IMR-90 (cell line): ENCODE measurements at regions of chr17 and their contacts with region 1.

Region 1: GRCh38 chr17:29640413-29640812 is 17.7 kb upstream of the CORO6 start:
- DNase-seq: peak; percentile 74
- ATAC-seq: peak; percentile 18
- H3K4me3 ChIP-seq: no peak overlapping the region
- H3K27ac ChIP-seq: peak overlapping the region; percentile 48; the same call in 1 of the 2 replicates
- H3K4me1 ChIP-seq: peaks cover 20% of the 10 kb centered on the region
- H3K27me3 ChIP-seq: no peaks in the 10 kb centered on the region
- CTCF ChIP-seq: no peak
- POLR2A ChIP-seq: no peak
- RAD21 ChIP-seq: no peak

Region 2: GRCh38 chr17:29760761-29761696 is 120.6 kb after region 1 on chr17:
- CTCF ChIA-PET with region 1: interaction called, 8 read pairs
- POLR2A ChIA-PET with region 1: no interaction called
- dilution Hi-C with region 1: no loop called
- in situ Hi-C with region 1: no loop called
- intact Hi-C with region 1: loop called (anchors 1 kb)
- DNase-seq: peak; percentile 83
- ATAC-seq: peak; percentile 99
- H3K4me3 ChIP-seq: peak overlapping the region; percentile 75
- H3K27ac ChIP-seq: peak overlapping the region; percentile 54
- H3K4me1 ChIP-seq: no peaks in the 10 kb centered on the region
- H3K27me3 ChIP-seq: no peaks in the 10 kb centered on the region
- CTCF ChIP-seq: no peak
- POLR2A ChIP-seq: peak; percentile 78
- RAD21 ChIP-seq: no peak

Region 3: GRCh38 chr17:29777663-29778062 is 137.2 kb after region 1 on chr17:
- CTCF ChIA-PET with region 1: interaction called, 32 read pairs
- POLR2A ChIA-PET with region 1: no interaction called
- dilution Hi-C with region 1: no loop called
- in situ Hi-C with region 1: loop called (anchors 5 kb)
- intact Hi-C with region 1: loop called (anchors 1 kb)
- DNase-seq: no peak
- ATAC-seq: no peak
- H3K4me3 ChIP-seq: no peak overlapping the region
- H3K27ac ChIP-seq: no peak overlapping the region
- H3K4me1 ChIP-seq: peaks cover 3% of the 10 kb centered on the region; the same call in 1 of the 2 replicates
- H3K27me3 ChIP-seq: no peaks in the 10 kb centered on the region
- CTCF ChIP-seq: no peak
- POLR2A ChIP-seq: no peak
- RAD21 ChIP-seq: no peak

Region 4: DNA sequence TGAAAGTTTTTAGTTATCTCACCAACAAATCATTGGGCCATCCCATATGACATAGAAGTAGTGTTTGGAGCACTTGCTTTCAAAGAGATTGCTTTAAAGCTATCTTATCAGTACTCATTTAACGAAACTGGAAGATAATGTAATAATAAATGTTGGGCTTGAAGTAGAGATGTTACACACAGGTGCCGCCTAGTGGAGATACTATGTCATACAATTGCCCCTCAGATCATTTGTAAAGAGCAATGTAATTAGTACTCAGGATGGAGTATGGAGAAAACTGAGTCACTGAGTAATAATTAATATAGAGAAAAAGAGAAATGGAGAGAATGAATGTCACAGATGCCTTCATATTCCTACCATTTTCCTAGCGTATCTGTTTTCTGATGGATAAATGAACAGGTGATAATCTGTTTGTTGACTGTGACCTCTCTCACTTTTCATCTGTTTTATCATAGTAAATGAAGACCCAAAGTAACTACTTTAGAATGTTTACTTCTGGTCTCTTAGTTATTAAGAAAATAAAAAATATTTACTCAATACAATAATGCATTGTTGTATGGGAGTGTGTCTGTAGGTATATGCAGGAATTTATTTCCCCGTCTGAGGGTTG is 381.4 kb after region 1 on chr17:
- CTCF ChIA-PET with region 1: interaction called, 5 read pairs
- POLR2A ChIA-PET with region 1: no interaction called
- dilution Hi-C with region 1: no loop called
- in situ Hi-C with region 1: no loop called
- intact Hi-C with region 1: loop called (anchors 2 kb)
- DNase-seq: peak; percentile 61
- ATAC-seq: peak; percentile 87
- H3K4me3 ChIP-seq: no peak overlapping the region
- H3K27ac ChIP-seq: no peak overlapping the region
- H3K4me1 ChIP-seq: no peaks in the 10 kb centered on the region
- H3K27me3 ChIP-seq: peaks cover 6% of the 10 kb centered on the region; the same call in 1 of the 2 replicates
- CTCF ChIP-seq: peak; percentile 78
- POLR2A ChIP-seq: no peak
- RAD21 ChIP-seq: peak; percentile 75

Region 5: DNA sequence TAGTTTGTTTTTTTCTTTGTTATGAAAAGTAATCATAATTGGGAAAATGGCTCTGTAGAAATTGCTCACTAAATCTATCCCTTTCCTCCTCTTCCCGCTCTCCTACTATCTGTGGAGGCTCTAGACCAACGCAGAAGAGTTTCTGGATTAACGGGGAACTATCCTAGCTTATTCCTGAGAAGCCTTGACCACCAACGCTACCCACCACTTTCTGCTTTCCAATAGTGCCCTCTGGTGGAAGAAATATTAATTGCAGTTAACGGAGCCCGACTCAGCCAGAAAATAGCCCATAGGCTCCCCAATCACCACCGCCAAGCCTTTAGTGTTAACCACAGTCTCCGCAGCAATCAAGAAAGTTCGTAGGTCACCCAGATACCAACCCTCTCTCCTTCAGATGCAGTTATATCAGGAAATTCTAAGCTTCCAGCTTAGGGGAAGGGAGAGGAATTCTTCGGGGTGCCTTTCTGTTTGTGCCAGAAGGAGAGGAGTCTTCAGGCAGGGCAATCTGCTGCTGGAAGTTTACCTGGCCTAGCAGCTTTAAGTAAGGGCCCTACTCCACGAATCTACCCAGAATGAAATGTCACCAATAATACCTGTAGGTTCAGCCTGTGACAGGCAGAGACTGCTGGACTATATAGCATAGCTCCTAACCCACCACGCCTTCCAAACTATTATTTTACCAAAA is 453.2 kb after region 1 on chr17:
- CTCF ChIA-PET with region 1: interaction called, 5 read pairs
- POLR2A ChIA-PET with region 1: no interaction called
- dilution Hi-C with region 1: no loop called
- in situ Hi-C with region 1: no loop called
- intact Hi-C with region 1: loop called (anchors 1 kb)
- DNase-seq: peak; percentile 58
- ATAC-seq: peak; percentile 76
- H3K4me3 ChIP-seq: no peak overlapping the region
- H3K27ac ChIP-seq: no peak overlapping the region
- H3K4me1 ChIP-seq: peaks cover 2% of the 10 kb centered on the region
- H3K27me3 ChIP-seq: no peaks in the 10 kb centered on the region
- CTCF ChIP-seq: peak; percentile 89
- POLR2A ChIP-seq: no peak
- RAD21 ChIP-seq: peak; percentile 94